Heart right ventricle (tissue), 16 donors: ENCODE measurements at regions of chr6 and their contacts with region 1.

Region 1: GRCh38 chr6:123802697-123803496 is 768 bp upstream of the NKAIN2 start:
- DNase-seq: peak; percentile 59 to 74
- ATAC-seq: peak; percentile 82 to 96 (median 94)
- H3K4me3 ChIP-seq: peak overlapping the region; percentile 19 to 65 (median 56)
- H3K27ac ChIP-seq: no peak overlapping the region
- H3K4me1 ChIP-seq: peaks cover 0 to 17% (median 7%) of the 10 kb centered on the region in 9 donors
- H3K27me3 ChIP-seq: peaks cover 0 to 75% (median 47%) of the 10 kb centered on the region in 7 donors
- CTCF ChIP-seq: peak in 8 of 9 donors; percentile 72 to 93 (median 84)

Region 2: DNA sequence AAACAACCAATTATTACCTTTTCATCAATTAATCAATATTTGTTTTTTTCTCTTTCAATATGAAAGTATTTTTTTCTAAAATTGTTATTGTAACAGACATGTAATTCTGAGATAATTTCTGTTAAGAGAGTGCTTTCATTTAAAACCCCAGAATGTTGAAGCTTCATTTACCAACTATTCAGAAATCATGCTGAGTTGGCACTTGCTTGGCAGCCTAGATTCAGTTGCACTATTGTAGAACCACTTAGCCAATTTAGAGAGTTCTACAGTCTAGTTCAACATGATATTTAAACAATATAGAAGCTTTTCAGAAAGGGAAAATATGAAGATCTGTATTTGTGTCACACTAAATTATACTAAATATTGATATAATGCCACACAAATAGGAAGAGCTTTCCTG is 55.4 kb before region 1 on chr6:
- intact Hi-C with region 1: no loop called
- DNase-seq: no peak
- ATAC-seq: no peak
- H3K4me3 ChIP-seq: no peak overlapping the region
- H3K27ac ChIP-seq: no peak overlapping the region
- H3K4me1 ChIP-seq: no peaks in the 10 kb centered on the region
- H3K27me3 ChIP-seq: no peaks in the 10 kb centered on the region
- CTCF ChIP-seq: no peak

Region 3: GRCh38 chr6:123965894-123966293 is 163.0 kb after region 1 on chr6:
- intact Hi-C with region 1: loop called in 6 of 10 experiments (anchors 2 to 10 kb)
- DNase-seq: peak in 1 of 2 donors; percentile 8
- ATAC-seq: peak in 2 of 8 donors; percentile 53 to 63
- H3K4me3 ChIP-seq: no peak overlapping the region
- H3K27ac ChIP-seq: no peak overlapping the region
- H3K4me1 ChIP-seq: no peaks in the 10 kb centered on the region
- H3K27me3 ChIP-seq: no peaks in the 10 kb centered on the region
- CTCF ChIP-seq: peak in 6 of 9 donors; percentile 24 to 52 (median 32)

Region 4: DNA sequence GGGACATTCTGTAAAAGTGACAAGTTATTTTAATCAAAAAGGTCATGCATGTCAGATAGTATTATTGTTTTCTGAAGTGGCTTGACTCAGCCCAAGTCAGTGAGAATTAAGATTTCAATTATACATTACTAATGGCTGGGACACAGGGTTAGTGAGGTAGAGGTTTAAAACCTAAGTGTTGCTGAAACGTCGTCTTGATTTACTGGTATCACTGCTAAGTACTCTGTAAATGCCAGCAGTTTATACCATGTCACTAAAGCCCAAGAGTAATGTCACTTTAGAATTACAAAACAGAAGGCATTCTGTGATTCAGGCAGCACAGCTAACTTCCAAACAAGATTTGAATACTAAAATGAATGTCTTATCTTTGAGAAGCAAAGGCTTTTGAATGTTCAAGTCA is 177.4 kb after region 1 on chr6:
- intact Hi-C with region 1: no loop called
- DNase-seq: no peak
- ATAC-seq: peak in 1 of 8 donors; percentile 25
- H3K4me3 ChIP-seq: no peak overlapping the region
- H3K27ac ChIP-seq: no peak overlapping the region
- H3K4me1 ChIP-seq: no peaks in the 10 kb centered on the region
- H3K27me3 ChIP-seq: no peaks in the 10 kb centered on the region
- CTCF ChIP-seq: no peak

Region 5: GRCh38 chr6:124054034-124054433 is 251.1 kb after region 1 on chr6:
- intact Hi-C with region 1: loop called in 1 of 10 experiments (anchors 5 kb)
- DNase-seq: no peak
- ATAC-seq: no peak
- H3K4me3 ChIP-seq: no peak overlapping the region
- H3K27ac ChIP-seq: no peak overlapping the region
- H3K4me1 ChIP-seq: no peaks in the 10 kb centered on the region
- H3K27me3 ChIP-seq: no peaks in the 10 kb centered on the region
- CTCF ChIP-seq: no peak

Region 6: GRCh38 chr6:124795643-124796463 is 993.0 kb after region 1 on chr6:
- intact Hi-C with region 1: loop called in 7 of 10 experiments (anchors 5 to 10 kb)
- DNase-seq: peak; percentile 8 to 19
- ATAC-seq: peak; percentile 52 to 90 (median 84)
- H3K4me3 ChIP-seq: no peak overlapping the region
- H3K27ac ChIP-seq: no peak overlapping the region
- H3K4me1 ChIP-seq: no peaks in the 10 kb centered on the region
- H3K27me3 ChIP-seq: peaks cover 0 to 4% (median 0%) of the 10 kb centered on the region in 7 donors
- CTCF ChIP-seq: peak in 8 of 9 donors; percentile 22 to 67 (median 58)

Region 7: DNA sequence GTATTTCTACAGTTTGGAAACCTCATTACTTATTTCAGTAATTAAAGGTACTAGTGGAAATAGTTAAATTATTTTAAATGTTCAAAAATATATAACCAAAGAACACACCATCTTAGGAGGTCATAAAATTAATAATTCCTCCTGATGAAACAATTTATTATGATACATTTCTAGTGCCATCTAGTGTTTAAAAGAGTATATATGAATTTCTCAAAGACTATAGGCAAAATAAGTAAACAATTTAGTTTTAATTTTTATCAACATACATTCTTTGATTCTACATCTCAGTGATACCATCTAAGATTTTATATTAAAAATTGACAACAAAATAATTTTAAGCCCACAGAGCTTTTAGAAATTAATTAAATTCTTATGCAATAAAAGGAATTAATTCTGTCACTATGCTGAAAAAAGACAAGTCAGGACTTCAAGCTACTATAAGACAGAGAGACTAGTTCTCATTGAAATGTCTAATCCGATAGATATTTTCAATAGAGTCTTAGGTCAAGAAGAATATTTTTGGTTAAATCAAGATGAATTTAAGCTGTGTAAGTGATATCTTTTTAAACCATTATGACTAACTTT is 1051.5 kb after region 1 on chr6:
- intact Hi-C with region 1: loop called in 1 of 10 experiments (anchors 5 kb)
- DNase-seq: no peak
- ATAC-seq: no peak
- H3K4me3 ChIP-seq: no peak overlapping the region
- H3K27ac ChIP-seq: no peak overlapping the region
- H3K4me1 ChIP-seq: no peaks in the 10 kb centered on the region
- H3K27me3 ChIP-seq: no peaks in the 10 kb centered on the region
- CTCF ChIP-seq: peak in 6 of 9 donors; percentile 6 to 50 (median 36)